ENCODE measurements at regions of chr6 and their contacts with region 1.

Region 1: DNA sequence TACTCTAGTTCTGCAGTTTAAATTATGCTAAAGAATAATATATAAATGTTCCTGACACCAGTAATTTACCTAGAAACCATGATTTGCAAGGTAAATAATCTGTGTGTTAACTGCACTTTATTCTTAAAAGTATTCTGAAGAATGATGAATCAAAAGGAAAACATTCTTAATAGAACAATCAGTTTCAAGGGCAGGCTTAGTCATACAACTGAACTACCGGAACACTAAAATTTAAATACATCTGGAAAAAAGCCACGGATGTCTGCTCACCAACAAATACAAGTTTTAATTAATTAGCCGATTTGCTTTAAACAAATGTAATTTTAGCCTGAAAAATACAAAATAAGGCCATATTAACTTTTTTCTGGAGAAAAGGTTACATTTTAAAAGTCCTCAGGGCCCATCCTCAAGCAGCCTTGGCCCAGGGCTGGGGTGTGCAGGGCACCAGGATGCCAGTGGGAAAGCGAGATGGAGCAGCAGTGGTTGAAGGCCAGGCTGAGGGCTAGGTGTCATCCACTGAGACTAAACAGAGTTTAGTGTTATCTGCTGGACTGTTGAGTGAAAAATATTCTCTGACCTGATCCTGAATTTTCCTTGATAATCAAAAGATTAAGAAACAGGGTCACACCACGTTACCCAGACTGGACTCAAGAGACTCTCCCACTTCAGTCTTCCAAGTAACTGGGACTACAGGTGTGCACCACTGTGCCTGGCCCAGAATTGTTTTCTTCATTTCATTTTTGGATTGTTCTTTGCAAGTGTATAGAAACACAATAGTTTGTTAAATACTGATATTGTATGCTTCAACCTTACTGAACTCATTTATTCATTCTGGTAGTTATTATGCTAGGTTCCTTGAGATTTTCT is 88.2 kb upstream of the DST start:
- DNase-seq: peak; percentile 83
- H3K4me3 ChIP-seq: peak overlapping the region in 1 of 3 experiments; percentile 45
- H3K27ac ChIP-seq: peak overlapping the region; percentile 77
- H3K4me1 ChIP-seq: peaks cover 46% of the 10 kb centered on the region
- H3K27me3 ChIP-seq: no peaks in the 10 kb centered on the region
- CTCF ChIP-seq: no peak
- POLR2A ChIP-seq: no peak

Region 2: DNA sequence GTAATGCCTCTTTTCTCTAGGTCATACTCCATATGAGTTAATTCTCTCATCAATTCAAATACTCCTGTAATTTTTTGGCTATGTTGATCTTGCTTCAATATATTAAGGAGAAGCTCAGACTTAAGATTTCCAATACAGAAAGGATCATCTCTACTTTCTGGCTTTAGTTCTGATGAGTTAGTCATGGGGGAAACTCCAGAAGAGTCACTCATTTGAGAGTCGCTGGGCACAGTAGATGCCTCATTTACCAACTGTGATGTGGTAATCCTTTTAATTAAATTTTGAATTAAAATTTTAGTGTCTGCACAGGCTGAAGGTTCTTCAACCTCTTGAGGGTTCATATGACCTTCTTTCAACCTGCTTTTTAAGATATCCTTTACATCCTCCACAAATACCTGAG is 126.7 kb before region 1 on chr6:
- CTCF ChIA-PET with region 1: no interaction called
- POLR2A ChIA-PET with region 1: no interaction called
- dilution Hi-C with region 1: no loop called
- intact Hi-C with region 1: no loop called
- DNase-seq: no peak
- H3K4me3 ChIP-seq: no peak overlapping the region
- H3K27ac ChIP-seq: no peak overlapping the region
- H3K4me1 ChIP-seq: no peaks in the 10 kb centered on the region
- H3K27me3 ChIP-seq: no peaks in the 10 kb centered on the region
- CTCF ChIP-seq: no peak
- POLR2A ChIP-seq: no peak

Region 3: DNA sequence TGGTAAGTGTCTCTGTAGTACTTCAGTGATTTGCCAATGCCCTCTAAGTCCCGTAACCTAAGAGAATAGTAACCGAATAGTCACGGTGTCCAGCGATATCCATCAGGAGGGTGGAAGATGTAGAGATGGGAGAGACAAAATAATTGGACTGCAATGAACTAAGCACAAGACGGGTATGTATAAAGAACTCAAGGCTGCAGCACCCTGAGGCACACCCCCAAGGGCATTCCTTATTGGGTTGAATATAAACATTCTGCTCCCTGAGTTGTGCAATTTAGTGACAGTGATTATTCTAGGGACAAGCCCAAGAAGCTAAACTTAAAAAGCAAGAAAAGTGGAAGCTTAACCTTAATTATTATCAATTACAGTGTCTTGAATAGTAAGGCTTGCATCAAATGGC is 102.8 kb before region 1 on chr6:
- CTCF ChIA-PET with region 1: no interaction called
- POLR2A ChIA-PET with region 1: no interaction called
- dilution Hi-C with region 1: no loop called
- intact Hi-C with region 1: no loop called
- DNase-seq: no peak
- H3K4me3 ChIP-seq: no peak overlapping the region
- H3K27ac ChIP-seq: no peak overlapping the region
- H3K4me1 ChIP-seq: no peaks in the 10 kb centered on the region
- H3K27me3 ChIP-seq: no peaks in the 10 kb centered on the region
- CTCF ChIP-seq: no peak
- POLR2A ChIP-seq: no peak

Region 4: GRCh38 chr6:56693246-56693607 is 37.7 kb before region 1 on chr6:
- CTCF ChIA-PET with region 1: no interaction called
- POLR2A ChIA-PET with region 1: no interaction called
- dilution Hi-C with region 1: no loop called
- intact Hi-C with region 1: no loop called
- DNase-seq: no peak
- H3K4me3 ChIP-seq: no peak overlapping the region
- H3K27ac ChIP-seq: peak overlapping the region; percentile 44
- H3K4me1 ChIP-seq: peaks cover 52% of the 10 kb centered on the region
- H3K27me3 ChIP-seq: no peaks in the 10 kb centered on the region
- CTCF ChIP-seq: no peak
- POLR2A ChIP-seq: no peak

Region 5: DNA sequence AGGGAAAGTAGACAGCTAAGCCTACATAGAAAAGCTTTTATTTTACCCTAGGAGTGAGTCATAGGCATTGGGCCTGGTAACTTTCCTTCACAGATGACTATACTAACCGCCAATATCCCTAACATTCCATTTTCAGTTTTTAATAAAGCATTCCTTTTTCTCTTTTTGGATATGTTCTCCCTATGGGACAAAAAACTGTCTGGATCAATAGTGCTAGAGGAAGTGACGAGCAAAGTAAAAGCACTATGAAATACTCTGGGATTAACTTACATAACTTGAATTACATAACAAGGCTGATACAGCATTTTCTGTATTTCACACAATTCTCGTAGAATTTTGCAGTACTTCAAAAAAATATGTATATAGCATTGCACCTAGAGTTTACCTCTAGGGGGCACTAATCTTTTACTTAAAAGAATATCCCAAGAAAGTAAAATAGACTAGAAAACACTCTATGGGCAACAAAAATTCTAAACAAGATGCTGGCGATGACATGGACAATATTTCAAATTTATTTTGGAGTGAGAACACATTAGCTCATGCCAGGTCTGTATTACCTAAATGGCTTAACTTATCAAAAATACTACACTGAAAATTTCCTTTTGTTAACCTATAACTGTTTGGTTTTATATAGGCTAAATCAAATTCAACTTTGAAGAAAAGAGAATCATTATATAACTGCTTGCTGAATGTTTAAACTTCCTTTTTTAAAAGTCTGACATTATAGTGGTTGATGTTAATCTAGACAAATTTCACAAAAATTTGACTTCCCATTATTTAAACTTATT is 21.9 kb before region 1 on chr6:
- CTCF ChIA-PET with region 1: interaction called, 13 read pairs
- POLR2A ChIA-PET with region 1: interaction called, 3 read pairs
- dilution Hi-C with region 1: no loop called
- intact Hi-C with region 1: loop called (anchors 2 kb)
- DNase-seq: peak; percentile 73
- H3K4me3 ChIP-seq: peak overlapping the region in 1 of 3 experiments; percentile 15
- H3K27ac ChIP-seq: peak overlapping the region; percentile 69
- H3K4me1 ChIP-seq: peaks cover 30% of the 10 kb centered on the region
- H3K27me3 ChIP-seq: no peaks in the 10 kb centered on the region
- CTCF ChIP-seq: peak; percentile 30 to 40
- POLR2A ChIP-seq: no peak

Region 6: GRCh38 chr6:56714982-56715456 is 15.9 kb before region 1 on chr6:
- CTCF ChIA-PET with region 1: interaction called, 13 read pairs
- POLR2A ChIA-PET with region 1: no interaction called
- dilution Hi-C with region 1: no loop called
- intact Hi-C with region 1: loop called (anchors 1 kb)
- DNase-seq: peak; percentile 95
- H3K4me3 ChIP-seq: no peak overlapping the region
- H3K27ac ChIP-seq: peak overlapping the region; percentile 86
- H3K4me1 ChIP-seq: peaks cover 50% of the 10 kb centered on the region
- H3K27me3 ChIP-seq: no peaks in the 10 kb centered on the region
- CTCF ChIP-seq: no peak
- POLR2A ChIP-seq: peak; percentile 34

Region 7: GRCh38 chr6:56757588-56757984 is 26.7 kb after region 1 on chr6:
- CTCF ChIA-PET with region 1: interaction called, 12 read pairs
- POLR2A ChIA-PET with region 1: no interaction called
- dilution Hi-C with region 1: no loop called
- intact Hi-C with region 1: no loop called
- DNase-seq: peak; percentile 76
- H3K4me3 ChIP-seq: no peak overlapping the region
- H3K27ac ChIP-seq: no peak overlapping the region
- H3K4me1 ChIP-seq: no peaks in the 10 kb centered on the region
- H3K27me3 ChIP-seq: no peaks in the 10 kb centered on the region
- CTCF ChIP-seq: peak; percentile 36 to 45
- POLR2A ChIP-seq: no peak

Measured in endothelial cell of umbilical vein (primary cell).